GM10248 (cell line): ENCODE measurements at regions of chr3 and their contacts with region 1.

Region 1: DNA sequence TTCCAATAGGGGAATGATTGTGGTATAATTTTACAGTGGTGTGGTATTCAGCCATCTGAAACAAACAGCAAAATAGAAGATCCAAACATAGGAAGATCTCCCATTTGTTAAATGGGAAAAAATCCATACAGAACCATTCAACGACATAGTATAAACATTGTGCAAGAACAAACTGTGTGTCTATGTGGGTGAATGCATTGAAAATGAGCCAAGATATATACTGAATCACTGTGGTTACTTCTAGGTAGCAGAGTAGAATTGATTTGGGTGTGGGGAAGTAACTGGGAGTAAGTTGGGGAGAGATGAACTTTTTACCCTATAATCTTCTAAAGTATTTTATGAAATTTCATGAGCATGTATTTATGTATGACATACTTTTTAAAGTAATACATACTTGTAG is 123.1 kb upstream of the UMPS start:
- DNase-seq: no peak
- CTCF ChIP-seq: no peak

Region 2: DNA sequence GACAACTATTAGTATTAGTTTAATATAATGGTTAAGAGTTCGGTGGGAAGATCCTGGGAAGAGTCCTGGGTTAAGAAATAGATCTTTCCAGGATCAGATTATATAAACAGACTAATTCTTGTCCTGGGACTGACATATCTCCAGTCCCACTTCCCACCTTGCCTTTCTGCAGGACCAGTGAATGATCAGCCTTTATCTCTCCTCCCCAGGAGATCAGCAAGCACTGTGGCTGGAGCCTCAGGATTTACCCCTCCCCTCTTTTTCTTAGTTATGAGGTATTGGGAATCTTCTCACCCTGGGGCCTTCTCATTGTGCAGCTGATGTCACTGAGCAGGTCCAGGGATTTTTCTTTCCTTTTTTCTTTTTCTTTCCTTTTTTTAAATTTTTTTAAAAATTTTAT is 12.6 kb before region 1 on chr3:
- CTCF ChIA-PET with region 1: interaction called, 11 read pairs
- POLR2A ChIA-PET with region 1: no interaction called
- DNase-seq: no peak
- CTCF ChIP-seq: no peak

Region 3: DNA sequence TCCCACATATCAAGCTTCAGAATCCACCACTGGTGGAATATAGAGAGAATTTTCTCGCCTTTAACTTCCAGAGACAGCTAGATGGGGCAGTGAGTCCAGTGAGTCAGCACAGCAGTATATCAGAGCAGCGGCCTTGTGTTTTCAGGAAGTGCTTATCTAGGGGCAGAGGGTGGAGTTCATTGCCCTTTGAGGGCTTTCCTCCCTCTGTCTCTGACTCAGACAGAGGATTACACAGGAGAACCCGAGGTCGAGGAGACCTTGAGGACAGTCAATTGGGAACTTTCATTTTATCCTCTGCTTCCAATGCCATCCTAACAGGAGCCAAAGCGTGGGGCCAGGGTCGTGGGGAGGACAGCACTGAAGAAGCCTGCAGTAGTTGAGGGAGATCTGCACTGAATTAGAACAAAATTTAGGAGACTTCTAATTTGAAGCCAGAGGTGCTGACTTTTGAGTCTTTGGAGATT is 13.5 kb after region 1 on chr3:
- CTCF ChIA-PET with region 1: interaction called, 10 read pairs
- POLR2A ChIA-PET with region 1: no interaction called
- DNase-seq: peak; percentile 47
- CTCF ChIP-seq: peak; percentile 42

Region 4: DNA sequence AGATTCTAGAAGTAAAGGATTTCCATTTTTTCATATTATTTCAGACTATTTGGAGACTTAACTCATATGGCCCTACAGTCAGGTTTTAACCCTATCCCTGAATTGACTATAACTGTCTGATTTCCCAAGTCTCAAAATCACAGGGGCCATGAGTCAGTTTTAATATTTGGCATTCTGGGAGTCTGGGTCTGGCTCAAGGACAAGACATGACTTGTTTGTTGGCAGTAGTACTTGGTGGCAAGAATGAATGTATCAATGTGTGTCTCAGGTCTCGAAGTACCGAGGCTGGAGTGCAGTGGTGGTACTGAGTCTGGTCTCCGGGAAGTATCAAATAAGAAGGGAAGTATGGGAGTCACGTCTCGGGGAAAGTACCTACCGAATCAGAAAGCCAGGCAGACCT is 133.9 kb after region 1 on chr3:
- CTCF ChIA-PET with region 1: no interaction called
- POLR2A ChIA-PET with region 1: no interaction called
- DNase-seq: no peak
- CTCF ChIP-seq: no peak